Dendritic cell treated with granulocyte-macrophage colony-stimulating factor and Interleukin-4, amounts not matched to agents 40 ng/mL and 50 ng/mL, for 4 days (primary cell): ENCODE measurements at regions of chr12 and their contacts with region 1.

Region 1: GRCh38 chr12:121550974-121551634 is 29.7 kb downstream of the KDM2B start:
- H3K4me3 Mint-ChIP-seq: no peak overlapping the region
- H3K27ac Mint-ChIP-seq: no peak overlapping the region
- H3K4me1 Mint-ChIP-seq: peaks cover 36% of the 10 kb centered on the region
- H3K27me3 Mint-ChIP-seq: no peaks in the 10 kb centered on the region

Region 2: DNA sequence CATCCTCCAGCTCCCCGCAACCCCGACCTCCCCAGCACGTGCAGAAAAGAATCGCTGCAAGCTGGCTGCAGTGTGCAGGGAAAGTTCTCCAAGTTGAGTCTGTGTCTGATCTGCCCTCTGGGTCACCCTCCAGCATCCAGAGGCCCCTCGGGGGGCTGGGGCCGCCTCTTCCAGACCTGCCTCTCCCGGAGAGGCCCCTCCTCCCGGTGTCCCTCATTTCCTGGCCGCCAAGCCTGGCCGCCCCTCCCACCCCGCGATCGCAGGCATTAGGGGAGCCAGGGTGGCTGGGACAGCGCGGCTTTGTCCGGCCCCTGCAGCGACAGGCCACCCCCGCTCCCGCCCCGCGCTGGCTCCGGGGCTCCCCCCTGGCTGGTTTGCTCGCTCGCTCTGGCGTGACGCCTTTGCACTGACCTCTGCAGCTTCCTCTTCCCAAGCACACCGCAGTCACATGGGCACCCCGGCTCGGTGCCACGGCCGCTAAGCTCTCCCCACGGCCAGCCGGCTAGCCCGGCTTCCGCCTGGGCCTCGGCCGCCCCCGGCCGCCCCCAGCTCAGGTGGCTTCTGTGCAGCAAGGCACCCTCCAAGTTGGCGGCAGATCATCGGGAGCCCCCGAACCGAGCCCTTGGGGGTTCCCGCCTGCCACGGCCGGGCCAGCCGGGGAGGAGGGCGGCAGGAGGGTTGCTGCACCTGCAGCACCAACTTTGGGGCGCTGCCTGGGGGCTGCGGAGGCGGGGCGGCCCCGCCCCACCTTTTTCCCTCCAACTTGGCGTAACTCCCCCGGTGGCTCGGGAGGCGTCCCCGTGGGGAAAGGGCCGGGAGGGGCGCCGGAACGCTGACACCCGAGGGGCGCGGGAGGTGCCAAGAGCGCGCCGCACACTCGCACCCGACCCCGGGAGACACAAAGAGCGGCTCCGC is 13.9 kb before region 1 on chr12:
- intact Hi-C with region 1: loop called (anchors 1 kb)
- H3K4me3 Mint-ChIP-seq: peak overlapping the region; percentile 78
- H3K27ac Mint-ChIP-seq: peak overlapping the region; percentile 92
- H3K4me1 Mint-ChIP-seq: peaks cover 83% of the 10 kb centered on the region
- H3K27me3 Mint-ChIP-seq: no peaks in the 10 kb centered on the region

Region 3: DNA sequence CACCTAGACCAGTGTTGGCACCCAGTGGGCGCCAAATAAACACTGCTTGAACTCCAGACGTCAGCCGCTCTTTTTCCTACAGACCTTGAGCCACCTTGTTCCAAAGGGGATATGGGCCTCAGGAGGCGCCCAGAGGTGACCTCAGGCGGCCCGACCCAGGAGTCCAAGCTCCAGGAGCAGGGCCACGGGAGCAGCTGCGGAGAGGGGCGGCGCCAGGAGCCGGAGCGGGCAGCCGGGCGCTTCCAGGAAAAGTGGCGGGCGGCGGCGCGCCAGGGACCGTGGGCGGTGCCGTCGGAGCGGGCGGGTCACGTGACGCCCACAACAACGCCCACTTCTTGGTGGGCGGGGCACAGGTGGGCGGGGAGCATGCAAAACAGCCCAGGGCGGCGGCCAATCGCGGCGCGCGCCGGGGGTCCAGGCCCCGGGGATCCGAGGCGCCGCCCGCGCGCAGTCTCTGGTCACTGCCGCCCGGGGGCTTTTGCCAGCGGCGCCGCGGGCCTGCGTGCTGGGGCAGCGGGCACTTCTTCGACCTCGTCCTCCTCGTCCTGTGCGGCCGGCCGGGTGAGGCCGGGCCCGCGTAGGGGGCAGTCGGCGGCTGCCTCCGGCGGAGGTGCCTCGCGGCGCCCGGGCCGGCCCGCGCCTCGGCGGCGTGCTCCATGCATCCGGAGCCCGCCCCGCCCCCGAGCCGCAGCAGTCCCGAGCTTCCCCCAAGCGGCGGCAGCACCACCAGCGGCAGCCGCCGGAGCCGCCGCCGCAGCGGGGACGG is 75.2 kb after region 1 on chr12 and contains the start of gene ORAI1:
- intact Hi-C with region 1: loop called (anchors 2 kb)
- H3K4me3 Mint-ChIP-seq: peak within 1 kb of the TSS; percentile 94
- H3K27ac Mint-ChIP-seq: peak within 1 kb of the TSS; percentile 89
- H3K4me1 Mint-ChIP-seq: peaks cover 53% of the 10 kb centered on the region
- H3K27me3 Mint-ChIP-seq: no peaks in the 10 kb centered on the region

Region 4: DNA sequence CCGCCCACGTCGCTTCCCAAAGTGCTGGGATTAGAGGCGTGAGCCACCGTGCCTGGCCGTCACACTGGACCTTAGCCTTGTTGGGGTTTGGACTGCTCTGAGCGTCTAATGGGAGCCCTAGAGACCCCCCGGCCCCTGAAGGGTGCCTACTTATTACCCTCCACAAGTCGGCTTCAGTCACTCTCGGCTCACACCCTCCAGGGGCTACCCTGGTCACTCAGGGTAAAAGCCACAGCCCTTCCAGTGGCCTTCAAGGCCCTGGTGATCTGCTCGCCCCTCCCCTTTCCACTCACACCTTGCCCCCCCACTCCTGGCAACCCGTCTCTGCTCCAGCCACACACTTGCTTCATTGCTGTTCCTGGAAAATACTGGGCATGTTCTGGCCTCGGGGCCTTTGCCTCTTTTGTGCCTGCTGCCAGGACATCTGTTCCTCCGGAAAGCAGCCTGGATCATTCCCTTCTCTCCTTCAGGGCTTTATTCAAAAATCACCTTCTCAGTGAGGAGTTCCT is 122.0 kb after region 1 on chr12:
- intact Hi-C with region 1: loop called (anchors 2 kb)
- H3K4me3 Mint-ChIP-seq: peak overlapping the region; percentile 74
- H3K27ac Mint-ChIP-seq: peak overlapping the region; percentile 73
- H3K4me1 Mint-ChIP-seq: peaks cover 33% of the 10 kb centered on the region
- H3K27me3 Mint-ChIP-seq: peaks cover 3% of the 10 kb centered on the region

Region 5: DNA sequence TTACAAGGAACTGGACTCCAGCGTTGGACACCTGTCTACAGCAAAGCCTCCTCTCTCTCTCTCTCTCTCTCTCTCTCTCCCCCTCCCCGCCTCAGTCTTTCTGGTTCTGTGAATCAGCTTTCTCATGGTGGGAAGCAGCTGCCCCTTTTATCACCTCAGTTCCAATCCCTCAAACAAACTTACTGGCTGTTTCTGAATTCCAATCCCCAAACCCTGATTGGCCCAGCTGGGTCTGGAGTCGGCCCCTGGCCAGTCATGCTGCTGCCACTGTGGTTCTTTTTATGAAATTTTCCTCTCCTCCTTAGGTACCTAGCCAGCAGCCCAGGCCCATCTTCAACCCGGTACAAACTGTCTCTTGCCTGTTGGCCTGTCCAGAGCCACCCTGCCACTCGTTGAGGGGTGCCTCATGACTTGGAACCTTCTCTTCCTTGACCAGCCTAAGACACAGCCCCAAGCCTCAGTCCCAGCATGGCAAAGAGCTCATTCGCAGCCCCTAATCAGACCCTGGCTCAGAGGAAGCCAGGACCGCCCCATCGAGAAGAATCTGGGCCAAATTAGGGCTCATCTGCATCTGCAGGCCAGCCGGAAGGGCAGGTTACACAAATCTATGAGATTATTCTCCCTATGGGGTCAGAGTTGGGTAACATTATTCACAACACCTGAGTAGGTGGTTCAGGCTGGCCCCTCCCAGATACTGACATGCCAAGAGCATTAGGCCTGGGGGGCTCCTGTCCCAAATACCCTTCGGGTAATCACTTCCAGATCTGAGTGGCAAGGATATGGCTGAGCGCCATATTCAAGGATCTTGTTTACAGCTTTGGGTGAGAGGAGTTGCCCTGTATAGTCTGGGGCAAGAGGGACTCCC is 127.8 kb after region 1 on chr12:
- intact Hi-C with region 1: loop called (anchors 1 kb)
- H3K4me3 Mint-ChIP-seq: no peak overlapping the region
- H3K27ac Mint-ChIP-seq: no peak overlapping the region
- H3K4me1 Mint-ChIP-seq: peaks cover 7% of the 10 kb centered on the region
- H3K27me3 Mint-ChIP-seq: no peaks in the 10 kb centered on the region